ENCODE measurements at regions of chr5 and their contacts with region 1.

Region 1: GRCh38 chr5:147971472-147971871 is 65.1 kb upstream of the C5orf46 start:
- DNase-seq: peak; percentile 29
- ATAC-seq: no peak
- H3K4me3 ChIP-seq: no peak overlapping the region
- H3K27ac ChIP-seq: no peak overlapping the region
- H3K4me1 ChIP-seq: peaks cover 11% of the 10 kb centered on the region
- H3K27me3 ChIP-seq: no peaks in the 10 kb centered on the region
- CTCF ChIP-seq: no peak

Region 2: GRCh38 chr5:147954971-147955370 is 16.5 kb before region 1 on chr5:
- CTCF ChIA-PET with region 1: no interaction called
- POLR2A ChIA-PET with region 1: no interaction called
- intact Hi-C with region 1: loop called (anchors 2 kb)
- DNase-seq: no peak
- ATAC-seq: no peak
- H3K4me3 ChIP-seq: no peak overlapping the region
- H3K27ac ChIP-seq: no peak overlapping the region
- H3K4me1 ChIP-seq: 0 out of 2 replicates have a peak, but pooled peaks cover 7% of the 10 kb centered on the region
- H3K27me3 ChIP-seq: no peaks in the 10 kb centered on the region
- CTCF ChIP-seq: no peak